Dendritic cell treated with granulocyte-macrophage colony-stimulating factor and Interleukin-4, amounts not matched to agents 40 ng/mL and 50 ng/mL, for 4 days (primary cell): ENCODE measurements at regions of chr10 and their contacts with region 1.

Region 1: DNA sequence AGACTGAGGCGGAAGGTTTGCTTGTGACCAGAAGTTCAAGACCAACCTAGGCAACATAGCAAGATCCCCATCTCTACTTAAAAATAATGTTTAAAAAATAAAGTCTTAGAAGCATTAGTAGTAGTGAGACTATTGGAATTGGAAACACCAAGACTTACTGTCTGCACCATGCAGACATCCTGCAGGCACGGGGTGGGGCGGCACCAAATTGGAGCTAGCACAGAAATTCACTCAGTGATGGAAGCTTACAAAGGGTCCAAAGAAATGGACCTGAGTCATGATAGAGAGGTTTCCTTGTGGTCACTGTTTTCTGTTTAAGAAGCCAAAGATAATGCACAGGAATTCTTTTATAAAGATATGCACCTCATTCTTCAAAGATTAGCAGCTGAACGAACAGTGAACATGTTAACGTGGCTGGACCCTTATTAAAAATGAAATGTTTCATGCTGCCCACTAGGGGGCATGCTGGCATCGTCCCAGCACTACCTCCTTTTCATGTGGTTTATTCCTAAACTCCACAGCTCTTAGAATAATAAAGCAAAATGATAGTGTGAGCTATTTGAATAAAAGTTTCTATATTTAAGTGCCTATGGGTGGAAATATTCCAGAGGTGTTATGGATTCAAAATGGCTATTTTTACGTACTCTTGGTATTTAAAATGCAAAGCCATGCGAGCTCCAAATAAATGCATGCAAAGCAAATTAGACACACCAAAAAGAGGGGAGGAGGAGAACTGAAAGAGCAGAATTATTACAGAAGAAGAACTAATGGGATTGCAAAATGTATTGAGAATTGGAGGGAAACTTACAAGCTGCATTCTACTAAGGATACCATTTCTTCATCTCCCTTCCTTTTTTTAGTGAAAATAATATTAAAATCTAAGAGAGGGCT is 28.6 kb downstream of the PDSS1 start:
- H3K4me3 Mint-ChIP-seq: no peak overlapping the region
- H3K27ac Mint-ChIP-seq: peak overlapping the region; percentile 34
- H3K4me1 Mint-ChIP-seq: peaks cover 17% of the 10 kb centered on the region
- H3K27me3 Mint-ChIP-seq: no peaks in the 10 kb centered on the region

Region 2: DNA sequence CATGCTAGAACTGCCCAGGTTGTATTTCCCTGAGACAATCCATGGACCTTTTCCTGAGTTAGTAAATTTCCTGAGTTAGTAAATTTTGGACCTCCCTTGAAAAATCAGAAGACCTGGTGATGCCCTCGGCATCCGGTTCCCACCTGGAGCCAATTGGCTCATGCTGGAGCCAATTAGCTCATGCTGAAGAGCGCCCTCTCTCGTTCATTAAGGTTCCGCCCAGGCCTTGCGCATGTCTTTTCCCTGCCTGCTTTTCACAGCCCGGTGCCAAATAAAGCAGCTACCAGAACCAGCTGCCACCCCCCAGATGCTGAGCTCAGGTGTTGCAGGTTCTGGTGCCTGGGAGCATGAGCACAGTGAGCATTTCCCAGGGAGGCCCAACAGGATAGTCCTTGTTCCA is 191.7 kb before region 1 on chr10:
- intact Hi-C with region 1: no loop called
- H3K4me3 Mint-ChIP-seq: no peak overlapping the region
- H3K27ac Mint-ChIP-seq: peak overlapping the region; percentile 44
- H3K4me1 Mint-ChIP-seq: peaks cover 31% of the 10 kb centered on the region
- H3K27me3 Mint-ChIP-seq: no peaks in the 10 kb centered on the region

Region 3: GRCh38 chr10:26810435-26811026 is 84.4 kb after region 1 on chr10:
- intact Hi-C with region 1: no loop called
- H3K4me3 Mint-ChIP-seq: no peak overlapping the region
- H3K27ac Mint-ChIP-seq: no peak overlapping the region
- H3K4me1 Mint-ChIP-seq: peaks cover 26% of the 10 kb centered on the region
- H3K27me3 Mint-ChIP-seq: no peaks in the 10 kb centered on the region

Region 4: GRCh38 chr10:26881600-26882331 is 155.7 kb after region 1 on chr10:
- intact Hi-C with region 1: loop called (anchors 1 kb)
- H3K4me3 Mint-ChIP-seq: no peak overlapping the region
- H3K27ac Mint-ChIP-seq: no peak overlapping the region
- H3K4me1 Mint-ChIP-seq: peaks cover 5% of the 10 kb centered on the region
- H3K27me3 Mint-ChIP-seq: peaks cover 12% of the 10 kb centered on the region